HEK293T (cell line): ENCODE measurements at regions of chr17 and their contacts with region 1.

Region 1: DNA sequence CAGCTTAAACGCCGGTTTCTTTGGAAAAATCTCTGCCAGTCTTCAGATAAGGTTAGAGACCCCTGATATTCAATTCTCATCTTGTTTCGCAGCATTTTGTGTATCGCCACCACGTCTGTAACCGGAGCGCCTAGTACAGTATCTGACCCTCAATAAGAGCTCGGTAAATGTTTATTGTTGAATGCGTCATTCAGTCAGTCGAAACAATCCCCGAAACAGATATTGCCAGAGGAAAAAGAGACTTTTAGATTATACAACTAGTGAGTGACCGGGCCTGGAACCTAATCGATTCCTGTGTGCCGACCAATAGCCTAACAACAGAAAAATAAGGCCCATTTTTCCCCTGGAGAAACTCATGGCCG is 626 bp downstream of the PELP1 start:
- DNase-seq: no peak

Region 2: DNA sequence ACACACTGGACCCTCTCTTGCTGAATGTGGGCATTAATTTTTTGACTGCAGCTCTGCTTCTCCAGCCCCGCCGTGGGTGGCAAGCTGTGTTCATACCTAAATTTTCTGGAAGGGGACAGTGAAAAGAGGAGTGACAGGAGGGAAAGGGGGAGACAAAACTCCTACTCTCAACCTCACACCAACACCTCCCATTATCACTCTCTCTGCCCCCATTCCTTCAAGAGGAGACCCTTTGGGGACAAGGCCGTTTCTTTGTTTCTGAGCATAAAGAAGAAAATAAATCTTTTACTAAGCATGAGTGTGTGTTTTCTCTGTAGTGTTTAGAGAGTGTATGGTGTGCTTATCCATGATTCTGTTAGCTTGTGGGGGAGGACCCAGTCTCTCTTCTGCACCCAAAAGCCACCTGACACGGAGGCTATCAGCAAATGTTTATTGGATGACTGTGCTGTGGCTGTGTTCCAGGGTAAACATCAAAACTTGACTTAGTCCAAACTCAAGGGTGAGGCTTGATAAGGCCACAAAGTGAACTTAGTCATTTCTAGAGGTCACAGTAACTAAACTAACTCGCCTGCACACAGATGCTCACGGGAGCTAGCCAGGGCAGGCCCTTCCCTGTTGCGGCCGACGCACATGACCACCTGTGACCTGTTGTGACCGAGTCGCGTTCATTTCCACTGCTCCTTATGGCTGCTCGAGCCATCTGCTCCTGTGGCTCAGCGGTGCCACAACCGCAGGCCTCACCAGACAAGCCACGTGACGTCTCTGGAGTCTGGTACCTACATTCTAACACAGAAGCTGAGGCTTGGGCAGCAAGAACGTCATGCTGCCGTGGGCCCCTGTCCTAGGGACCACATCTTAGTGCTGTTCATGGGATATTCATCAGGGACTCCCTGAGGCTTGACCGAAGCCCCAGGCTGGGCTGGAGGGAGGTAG is 18.2 kb after region 1 on chr17:
- CTCF ChIA-PET with region 1: no interaction called
- POLR2A ChIA-PET with region 1: no interaction called
- DNase-seq: no peak

Region 3: DNA sequence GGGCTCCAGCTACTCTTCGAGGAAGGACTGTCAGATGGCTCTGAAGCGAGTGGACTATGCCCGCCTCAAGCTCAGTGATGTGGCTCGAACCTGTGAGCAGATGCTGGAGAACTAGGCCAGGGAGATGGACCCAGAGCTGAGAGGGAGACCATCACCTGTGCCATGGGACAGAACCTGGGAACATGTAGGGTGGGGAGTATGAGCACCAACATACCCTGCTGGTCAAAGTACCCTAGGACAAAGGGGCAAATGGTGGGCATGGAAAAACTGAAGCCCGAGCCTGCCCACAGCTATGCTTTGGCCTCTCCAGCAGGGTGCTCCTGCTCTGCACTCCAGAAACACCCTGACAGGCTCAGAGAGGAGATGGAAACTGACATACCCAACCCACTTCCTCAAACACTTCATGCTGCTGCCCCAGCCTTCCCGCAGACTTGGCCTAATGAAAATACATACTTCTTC is 29.8 kb after region 1 on chr17:
- CTCF ChIA-PET with region 1: no interaction called
- POLR2A ChIA-PET with region 1: interaction called, 11 read pairs
- DNase-seq: no peak